ENCODE measurements at regions of chr2 and their contacts with region 1.

Region 1: DNA sequence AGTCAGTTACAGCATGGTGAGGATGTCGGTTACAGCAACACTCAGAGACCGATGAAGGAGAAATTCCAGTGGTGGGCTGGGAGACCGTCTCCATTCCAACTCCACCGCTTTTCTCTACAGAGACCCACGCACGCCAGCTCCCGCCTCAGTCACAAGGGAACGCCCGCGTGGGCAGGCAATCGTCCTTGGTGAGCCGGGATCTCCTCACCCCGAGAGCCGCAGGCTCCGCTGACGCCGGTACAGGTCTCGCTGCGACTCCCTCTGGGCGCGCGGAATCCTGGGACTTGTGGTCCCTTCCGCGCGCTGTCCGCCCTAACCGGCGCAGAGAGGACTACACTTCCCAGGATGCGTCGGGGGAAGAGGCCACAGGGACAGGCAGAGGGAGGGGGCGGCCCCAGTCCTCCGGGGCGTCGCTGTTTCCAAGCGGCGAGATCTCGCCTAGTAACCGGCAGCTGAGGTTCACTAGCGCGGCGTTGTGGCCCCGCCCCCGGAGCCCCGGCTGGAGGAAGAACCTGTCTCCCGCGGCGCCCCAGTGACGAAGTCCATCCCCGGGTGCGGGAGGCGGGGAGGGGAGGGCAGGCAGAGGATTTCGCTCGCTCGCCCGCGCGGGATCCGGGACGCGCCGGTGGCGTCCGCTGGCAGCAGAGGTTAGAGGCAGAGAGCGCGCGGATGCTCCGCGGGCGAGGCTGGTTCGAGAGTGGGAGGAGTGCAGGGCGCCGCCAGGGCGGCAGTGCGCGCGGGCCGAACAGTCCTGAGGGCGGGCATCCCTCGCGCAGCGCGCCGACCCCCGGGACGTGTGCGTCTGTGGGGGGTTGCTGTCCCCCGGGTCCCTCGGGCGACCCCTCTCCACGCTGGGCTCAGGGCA is at the start of gene EML6:
- DNase-seq: peak; percentile 99
- ATAC-seq: peak; percentile 98 to 99 (median 98)
- H3K4me3 ChIP-seq: peak within 1 kb of the TSS; percentile 67 to 76 (median 68)
- H3K27ac ChIP-seq: peak within 1 kb of the TSS; percentile 40 to 61 (median 51)
- H3K4me1 ChIP-seq: no peaks in the 10 kb centered on the region
- H3K27me3 ChIP-seq: no peaks in the 10 kb centered on the region
- CTCF ChIP-seq: peak in 3 of 4 donors; percentile 12 to 20 (median 13)
- POLR2A ChIP-seq: peak; percentile 71
- total RNA-seq, gene EML6: 0.82 to 2.5 (median 1.5) TPM

Region 2: DNA sequence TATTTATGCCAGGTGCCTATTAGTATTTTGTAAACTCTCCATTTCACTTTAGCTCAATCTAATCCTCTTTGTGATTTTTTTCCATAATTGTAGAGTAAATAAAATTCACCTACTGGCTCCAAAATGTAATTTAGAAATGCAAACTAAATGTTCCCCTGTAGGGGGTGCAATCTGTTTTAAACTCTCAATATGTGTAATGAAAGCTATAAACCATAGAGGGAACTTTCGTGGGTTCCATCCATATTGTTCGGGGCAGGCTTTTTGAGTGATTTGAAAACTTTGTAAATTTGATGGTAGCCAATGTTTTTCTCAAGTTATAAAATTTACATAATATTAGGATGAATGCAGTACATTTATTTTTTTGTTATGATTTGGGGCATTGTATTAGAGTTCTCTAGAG is 516.8 kb before region 1 on chr2:
- intact Hi-C with region 1: no loop called
- DNase-seq: no peak
- ATAC-seq: peak in 3 of 4 donors; percentile 40 to 66 (median 64)
- H3K4me3 ChIP-seq: no peak overlapping the region
- H3K27ac ChIP-seq: no peak overlapping the region
- H3K4me1 ChIP-seq: peaks cover 0 to 16% (median 5%) of the 10 kb centered on the region in 4 donors
- H3K27me3 ChIP-seq: no peaks in the 10 kb centered on the region
- CTCF ChIP-seq: peak; percentile 47 to 62 (median 56)
- POLR2A ChIP-seq: no peak

Region 3: DNA sequence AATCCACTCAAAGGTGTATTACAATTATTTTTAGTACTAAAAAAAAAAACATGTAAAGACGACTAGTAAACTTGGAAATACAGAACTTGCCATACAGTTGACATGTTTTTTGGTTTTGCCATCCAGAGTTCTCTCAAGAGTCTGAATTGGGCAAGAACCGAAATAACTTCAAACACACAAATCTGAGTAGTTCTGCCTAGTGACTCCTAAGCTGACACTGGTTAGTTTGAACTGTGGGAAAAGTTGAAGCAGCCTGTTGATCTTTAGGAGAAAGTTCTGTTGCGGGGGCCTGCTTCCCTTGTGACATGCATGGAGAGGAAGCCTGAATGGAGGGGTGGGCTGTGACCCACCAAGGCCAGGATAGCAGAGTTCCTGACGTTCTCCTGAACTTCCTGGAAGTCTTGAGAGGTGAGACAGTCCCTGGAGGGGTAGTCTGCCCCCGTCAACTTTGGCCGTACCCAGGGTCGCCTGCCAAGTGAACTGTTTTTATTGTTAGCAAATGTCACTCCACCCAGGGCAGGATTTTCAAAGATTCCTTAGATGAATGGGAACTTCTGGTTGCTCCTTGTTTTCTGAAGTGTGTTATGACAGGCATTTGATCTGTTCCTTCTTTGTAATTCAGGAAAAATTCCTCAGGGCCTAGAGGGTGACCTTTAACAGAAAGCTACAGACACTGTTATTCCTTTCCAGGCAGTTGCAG is 352.8 kb before region 1 on chr2:
- intact Hi-C with region 1: no loop called
- DNase-seq: no peak
- ATAC-seq: peak in 1 of 4 donors; percentile 24
- H3K4me3 ChIP-seq: no peak overlapping the region
- H3K27ac ChIP-seq: no peak overlapping the region
- H3K4me1 ChIP-seq: no peaks in the 10 kb centered on the region
- H3K27me3 ChIP-seq: no peaks in the 10 kb centered on the region
- CTCF ChIP-seq: no peak
- POLR2A ChIP-seq: no peak

Region 4: GRCh38 chr2:54665436-54665856 is 57.9 kb before region 1 on chr2:
- intact Hi-C with region 1: no loop called
- DNase-seq: no peak
- ATAC-seq: peak; percentile 8 to 45 (median 17)
- H3K4me3 ChIP-seq: no peak overlapping the region
- H3K27ac ChIP-seq: peak overlapping the region; percentile 20 to 92 (median 89)
- H3K4me1 ChIP-seq: peaks cover 0 to 53% (median 31%) of the 10 kb centered on the region in 4 donors
- H3K27me3 ChIP-seq: no peaks in the 10 kb centered on the region
- CTCF ChIP-seq: peak; percentile 51 to 72 (median 60)
- POLR2A ChIP-seq: no peak

Region 5: DNA sequence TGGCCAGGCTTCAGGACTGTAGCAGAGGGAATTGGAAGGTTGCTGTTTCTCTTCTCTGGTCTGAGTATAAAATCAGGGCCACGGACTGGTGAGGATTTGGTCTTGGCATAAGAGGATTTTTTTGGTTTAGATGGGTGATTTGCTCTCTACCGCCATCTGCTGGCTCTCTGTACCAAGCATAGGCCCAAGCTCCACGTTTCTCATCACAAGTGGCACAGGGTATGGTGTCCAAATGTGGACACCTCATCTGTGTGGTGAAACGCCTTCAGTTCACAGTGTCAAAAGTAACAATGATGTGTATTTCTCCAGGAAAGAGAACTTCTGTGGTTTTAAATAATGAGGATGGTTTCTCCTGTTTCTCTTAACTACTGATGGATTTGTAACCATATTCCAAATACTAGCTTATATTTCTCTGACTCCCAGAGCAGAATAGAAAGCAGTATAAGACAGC is 115.2 kb after region 1 on chr2:
- intact Hi-C with region 1: loop called in 1 of 2 experiments (anchors 10 kb)
- DNase-seq: peak in 2 of 3 donors; percentile 55 to 76
- ATAC-seq: peak; percentile 94 to 99 (median 98)
- H3K4me3 ChIP-seq: no peak overlapping the region
- H3K27ac ChIP-seq: no peak overlapping the region
- H3K4me1 ChIP-seq: peaks cover 0 to 4% (median 2%) of the 10 kb centered on the region in 4 donors
- H3K27me3 ChIP-seq: no peaks in the 10 kb centered on the region
- CTCF ChIP-seq: peak; percentile 79 to 95 (median 92)
- POLR2A ChIP-seq: no peak

Region 6: GRCh38 chr2:54879598-54880332 is 156.4 kb after region 1 on chr2:
- intact Hi-C with region 1: no loop called
- DNase-seq: peak; percentile 38 to 81 (median 70)
- ATAC-seq: peak; percentile 97 to 99 (median 98)
- H3K4me3 ChIP-seq: peak overlapping the region in 1 of 3 donors; percentile 15
- H3K27ac ChIP-seq: peak overlapping the region in 1 of 3 donors; percentile 24
- H3K4me1 ChIP-seq: peaks cover 0 to 5% (median 0%) of the 10 kb centered on the region in 4 donors
- H3K27me3 ChIP-seq: no peaks in the 10 kb centered on the region
- CTCF ChIP-seq: no peak
- POLR2A ChIP-seq: no peak